ENCODE measurements at regions of chr7 and their contacts with region 1.

Region 1: GRCh38 chr7:130887182-130888016 is 153.4 kb upstream of the KLF14 start:
- DNase-seq: no peak
- ATAC-seq: no peak
- H3K4me3 Mint-ChIP-seq: no peak overlapping the region
- H3K27ac Mint-ChIP-seq: peak overlapping the region; percentile 16
- H3K4me1 Mint-ChIP-seq: peaks cover 46% of the 10 kb centered on the region
- H3K27me3 Mint-ChIP-seq: no peaks in the 10 kb centered on the region

Region 2: GRCh38 chr7:130875265-130875741 is 12.1 kb before region 1 on chr7:
- CTCF ChIA-PET with region 1: interaction called, 15 read pairs
- POLR2A ChIA-PET with region 1: no interaction called
- DNase-seq: peak; percentile 66
- ATAC-seq: peak; percentile 80
- H3K4me3 Mint-ChIP-seq: no peak overlapping the region
- H3K27ac Mint-ChIP-seq: no peak overlapping the region
- H3K4me1 Mint-ChIP-seq: peaks cover 19% of the 10 kb centered on the region
- H3K27me3 Mint-ChIP-seq: no peaks in the 10 kb centered on the region